ENCODE measurements at regions of chr16 and their contacts with region 1.

Region 1: DNA sequence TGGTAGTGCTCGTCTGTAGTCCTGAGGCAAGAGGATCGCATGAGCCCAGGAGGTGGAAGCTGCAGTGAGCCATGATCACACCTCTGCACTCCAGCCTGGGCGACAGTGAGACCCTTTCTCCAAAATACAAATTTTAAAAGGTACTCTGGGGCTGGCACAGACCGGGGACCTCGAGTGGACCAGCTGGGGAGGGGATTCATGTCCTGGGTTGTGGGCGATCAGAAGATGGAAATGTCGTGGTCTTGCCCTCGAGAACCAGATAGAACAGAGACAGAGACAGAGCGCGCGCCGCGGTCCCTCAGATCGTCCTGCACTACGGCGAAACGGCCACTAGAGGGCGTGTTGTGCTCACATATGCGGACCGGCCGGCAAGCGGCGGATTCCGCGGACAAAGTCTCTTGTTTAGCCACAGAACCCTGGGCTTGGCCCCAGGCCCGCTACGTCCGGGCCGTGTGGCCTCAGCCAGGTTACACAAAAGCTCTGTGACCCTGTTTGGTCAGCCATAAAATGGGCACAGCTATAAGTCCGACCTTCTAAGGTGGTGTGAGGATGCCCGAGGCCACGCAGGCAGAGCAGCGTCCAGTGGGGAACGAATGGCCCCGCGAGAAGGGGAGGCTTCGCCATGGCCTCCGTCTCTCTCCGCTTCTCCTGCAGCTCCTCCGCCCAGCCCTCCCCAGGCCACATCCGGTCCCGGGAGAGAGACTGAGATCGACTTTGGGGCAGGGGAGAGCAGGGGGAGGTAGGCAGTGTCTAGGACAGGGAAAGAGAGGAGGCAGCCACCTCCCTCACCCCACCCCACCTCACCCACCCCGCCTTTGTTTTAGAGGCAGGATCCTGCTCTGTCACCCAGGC is 14.6 kb upstream of the SBK1 start:
- DNase-seq: peak; percentile 3
- ATAC-seq: peak; percentile 99
- H3K4me3 ChIP-seq: no peak overlapping the region
- H3K27ac ChIP-seq: no peak overlapping the region
- H3K4me1 ChIP-seq: peaks cover 2% of the 10 kb centered on the region; the same call in 1 of the 2 replicates
- H3K27me3 ChIP-seq: no peaks in the 10 kb centered on the region; a peak in 1 of 4 replicates
- CTCF ChIP-seq: peak; percentile 90 to 97 (median 92)
- EP300 ChIP-seq: no peak
- POLR2A ChIP-seq: no peak
- RAD21 ChIP-seq: peak; percentile 93

Region 2: GRCh38 chr16:27690608-27691007 is 587.2 kb before region 1 on chr16:
- CTCF ChIA-PET with region 1: no interaction called
- POLR2A ChIA-PET with region 1: no interaction called
- RAD21 ChIA-PET with region 1: no interaction called
- SMC1A ChIA-PET with region 1: no interaction called
- in situ Hi-C with region 1: no loop called
- intact Hi-C with region 1: no loop called
- DNase-seq: no peak
- ATAC-seq: peak; percentile 60
- H3K4me3 ChIP-seq: no peak overlapping the region
- H3K27ac ChIP-seq: no peak overlapping the region
- H3K4me1 ChIP-seq: no peaks in the 10 kb centered on the region
- H3K27me3 ChIP-seq: no peaks in the 10 kb centered on the region
- CTCF ChIP-seq: peak; percentile 53 to 58 (median 56)
- EP300 ChIP-seq: no peak
- POLR2A ChIP-seq: no peak
- RAD21 ChIP-seq: peak; percentile 49; the same call in 1 of the 2 replicates

Region 3: DNA sequence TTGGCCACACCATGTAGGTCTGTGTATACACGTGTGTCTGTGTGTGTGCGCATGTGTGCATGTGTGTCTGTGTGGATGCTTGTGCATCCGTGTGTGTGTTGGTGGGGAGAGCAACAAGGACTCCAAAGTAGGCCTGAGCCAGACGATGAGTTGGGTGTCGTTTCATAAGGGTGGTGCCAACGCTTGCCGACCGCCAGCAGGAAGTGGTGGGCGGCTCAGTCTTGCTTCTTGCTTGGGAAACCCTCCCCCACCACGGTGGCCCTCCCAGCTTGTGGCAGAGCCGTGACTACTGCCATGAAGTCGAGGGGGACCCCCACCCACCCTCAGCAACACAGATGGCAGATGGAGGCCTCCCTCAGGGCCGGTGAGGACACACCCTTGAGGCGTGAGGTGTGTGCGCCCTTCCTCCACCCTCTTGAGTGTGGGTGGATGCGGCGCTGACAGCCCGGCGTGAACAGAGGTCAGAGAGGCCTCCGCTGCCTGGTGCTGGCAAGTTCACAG is 32.1 kb after region 1 on chr16:
- CTCF ChIA-PET with region 1: interaction called, 6 read pairs
- POLR2A ChIA-PET with region 1: no interaction called
- RAD21 ChIA-PET with region 1: interaction called, 5 read pairs
- SMC1A ChIA-PET with region 1: no interaction called
- in situ Hi-C with region 1: loop called (anchors 5 kb)
- intact Hi-C with region 1: no loop called
- DNase-seq: no peak
- ATAC-seq: peak; percentile 45; the same call in 1 of the 3 replicates
- H3K4me3 ChIP-seq: no peak overlapping the region
- H3K27ac ChIP-seq: no peak overlapping the region
- H3K4me1 ChIP-seq: peaks cover 3% of the 10 kb centered on the region; the same call in 1 of the 2 replicates
- H3K27me3 ChIP-seq: peaks cover 0 to 2% of the 10 kb centered on the region in 2 experiments; a peak in 2 of 4 replicates
- CTCF ChIP-seq: no peak
- EP300 ChIP-seq: no peak
- POLR2A ChIP-seq: no peak; the same call in 1 of the 2 replicates
- RAD21 ChIP-seq: no peak

Region 4: DNA sequence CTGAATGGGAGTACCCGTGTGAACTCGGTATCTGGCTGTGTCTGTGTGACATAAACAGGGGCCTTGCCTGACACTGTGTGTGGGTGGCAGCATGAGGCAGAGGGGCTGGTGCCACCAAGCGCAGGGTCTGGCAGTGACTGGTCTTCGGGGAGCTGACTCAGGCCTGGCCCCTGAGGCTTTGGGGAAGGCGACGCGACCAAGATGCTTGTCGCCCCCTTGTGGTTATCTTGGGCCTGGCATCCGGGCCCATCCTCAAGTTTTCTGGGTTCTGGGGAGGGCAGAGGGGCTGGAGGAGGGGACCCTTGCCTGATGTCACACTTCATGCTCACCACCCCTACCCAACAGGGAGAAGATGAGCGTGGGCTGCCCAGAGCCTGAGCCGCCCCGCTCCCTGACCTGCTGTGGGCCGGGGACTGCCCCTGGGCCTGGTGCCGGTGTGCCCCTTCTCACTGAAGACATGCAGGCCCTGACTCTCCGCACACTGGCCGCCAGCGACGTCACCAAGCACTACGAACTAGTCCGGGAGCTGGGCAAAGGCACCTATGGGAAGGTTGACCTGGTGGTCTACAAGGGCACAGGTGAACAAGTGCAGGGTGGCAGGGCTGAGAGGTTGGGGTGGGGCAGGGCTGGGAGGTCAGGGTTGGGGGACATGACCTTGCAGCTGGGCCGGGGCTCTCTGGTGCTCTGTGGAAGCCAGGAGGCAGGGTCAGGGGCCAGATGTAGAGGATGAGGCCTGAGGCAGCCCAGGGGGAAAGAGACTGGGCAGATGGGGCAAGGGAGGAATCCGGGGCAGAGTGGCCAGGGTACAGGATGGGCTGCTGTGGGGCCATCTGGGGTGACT is 39.5 kb after region 1 on chr16:
- CTCF ChIA-PET with region 1: interaction called, 20 read pairs
- POLR2A ChIA-PET with region 1: no interaction called
- RAD21 ChIA-PET with region 1: no interaction called
- SMC1A ChIA-PET with region 1: interaction called, 6 read pairs
- in situ Hi-C with region 1: loop called (anchors 5 kb)
- intact Hi-C with region 1: loop called (anchors 1 kb)
- DNase-seq: no peak
- ATAC-seq: peak; percentile 86
- H3K4me3 ChIP-seq: no peak overlapping the region
- H3K27ac ChIP-seq: no peak overlapping the region
- H3K4me1 ChIP-seq: no peaks in the 10 kb centered on the region
- H3K27me3 ChIP-seq: no peaks in the 10 kb centered on the region
- CTCF ChIP-seq: peak; percentile 76 to 89 (median 81)
- EP300 ChIP-seq: no peak
- POLR2A ChIP-seq: no peak
- RAD21 ChIP-seq: peak; percentile 70